Activated CD8-positive, alpha-beta T cell treated with anti-CD3 and anti-CD28 coated beads, Interleukin-2, amount 10 ng/mL, durations not matched to agents 7 days and 5 days (primary cell): ENCODE measurements at regions of chr6 and their contacts with region 1.

Region 1: GRCh38 chr6:34248727-34249551 is at the start of gene SMIM29:
- DNase-seq: peak; percentile 97
- ATAC-seq: peak; percentile 92
- H3K4me3 Mint-ChIP-seq: peak within 1 kb of the TSS; percentile 96
- H3K27ac Mint-ChIP-seq: peak within 1 kb of the TSS; percentile 92
- H3K4me1 Mint-ChIP-seq: peaks cover 53% of the 10 kb centered on the region
- H3K27me3 Mint-ChIP-seq: peaks cover 11% of the 10 kb centered on the region
- total RNA-seq, gene SMIM29: 21.3 to 26.7 TPM

Region 2: DNA sequence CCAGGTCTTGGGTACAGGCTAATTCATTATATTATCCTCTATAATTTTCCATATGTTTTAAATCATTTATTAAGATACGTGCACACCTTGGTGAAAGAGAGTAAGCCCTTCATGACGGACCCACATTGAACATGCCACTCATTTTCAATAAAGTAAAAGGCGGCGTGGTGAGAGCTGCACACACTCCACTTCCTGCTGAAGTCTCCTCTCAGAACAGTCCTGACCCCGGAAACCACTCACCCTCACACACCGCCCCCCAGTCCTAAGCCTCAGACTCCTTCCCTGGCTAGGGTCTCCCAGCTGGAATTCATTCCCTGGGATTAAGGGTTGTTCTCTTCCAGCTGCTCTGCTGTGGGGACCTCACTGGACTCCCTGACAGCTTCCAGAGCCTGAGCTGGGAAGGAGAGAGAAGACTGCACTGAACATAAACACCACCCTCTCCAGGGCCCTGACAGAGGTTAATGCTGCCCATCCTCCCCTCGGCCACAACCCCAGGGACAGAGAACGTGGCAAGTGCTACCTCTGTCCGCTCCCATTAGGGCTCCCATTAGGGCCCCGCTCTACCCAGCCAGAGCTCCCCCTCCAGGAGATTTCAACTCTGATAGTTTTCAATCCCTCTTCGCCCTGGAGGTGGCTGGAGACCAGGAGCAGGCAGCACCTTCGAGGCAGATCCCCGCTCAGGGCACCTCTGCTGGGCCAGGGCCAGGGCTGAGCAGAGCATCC is 127.8 kb before region 1 on chr6:
- CTCF ChIA-PET with region 1: no interaction called
- POLR2A ChIA-PET with region 1: no interaction called
- DNase-seq: no peak
- ATAC-seq: peak; percentile 53
- H3K4me3 Mint-ChIP-seq: no peak overlapping the region
- H3K27ac Mint-ChIP-seq: no peak overlapping the region
- H3K4me1 Mint-ChIP-seq: peaks cover 9% of the 10 kb centered on the region
- H3K27me3 Mint-ChIP-seq: peaks cover 2% of the 10 kb centered on the region

Region 3: DNA sequence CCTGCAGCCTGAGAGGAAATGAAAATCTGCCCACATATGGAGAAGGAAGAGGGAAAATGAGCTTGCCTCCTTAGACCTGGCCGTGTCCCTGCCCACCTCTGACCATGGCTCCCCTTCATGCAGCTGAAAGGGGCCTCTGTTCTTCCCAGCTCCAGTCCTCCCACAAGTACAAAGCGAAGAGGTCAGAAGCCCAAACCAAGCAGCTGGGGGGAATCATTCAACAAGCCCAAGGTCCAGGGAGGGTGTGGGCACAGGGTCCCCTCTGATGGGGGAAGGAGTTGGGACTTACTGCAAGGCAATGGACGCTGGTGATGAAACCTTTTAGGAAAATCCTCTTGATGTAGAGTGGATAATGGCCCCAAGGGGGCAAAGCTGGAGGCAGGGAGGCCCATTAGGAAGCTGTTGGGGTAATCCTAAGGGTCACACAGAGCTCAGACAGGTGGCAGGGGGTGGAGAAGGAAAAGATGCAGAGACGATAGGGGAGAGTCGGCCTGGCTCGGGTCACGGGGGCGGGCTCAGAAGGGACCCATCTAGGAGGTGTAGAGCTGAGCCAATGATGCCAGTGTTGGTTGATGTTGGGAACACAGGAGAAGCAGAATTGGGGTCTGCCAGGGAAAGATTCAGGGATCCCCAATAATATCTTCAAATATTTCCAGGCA is 87.0 kb before region 1 on chr6:
- CTCF ChIA-PET with region 1: interaction called, 10 read pairs
- POLR2A ChIA-PET with region 1: no interaction called
- DNase-seq: no peak
- ATAC-seq: no peak
- H3K4me3 Mint-ChIP-seq: no peak overlapping the region
- H3K27ac Mint-ChIP-seq: no peak overlapping the region
- H3K4me1 Mint-ChIP-seq: no peaks in the 10 kb centered on the region
- H3K27me3 Mint-ChIP-seq: peaks cover 24% of the 10 kb centered on the region

Region 4: DNA sequence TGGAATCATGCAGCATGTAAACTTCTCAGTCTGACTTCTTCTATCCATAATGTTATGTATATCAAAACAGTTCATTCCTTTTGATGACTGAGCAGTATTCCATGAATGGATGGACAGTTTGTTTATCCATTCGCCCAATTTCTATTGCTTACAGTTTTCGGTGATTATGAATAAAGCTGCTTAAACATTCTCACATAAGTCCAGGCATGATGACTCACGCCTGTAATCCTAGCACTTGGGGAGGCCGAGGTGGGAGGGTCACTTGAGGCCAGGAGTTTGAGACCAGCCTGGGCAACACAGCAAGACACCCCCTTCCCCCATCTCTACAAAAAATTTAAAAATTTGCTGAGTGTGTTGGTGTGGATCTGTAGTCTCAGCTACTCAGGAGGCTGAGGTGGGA is 35.2 kb before region 1 on chr6:
- CTCF ChIA-PET with region 1: no interaction called
- POLR2A ChIA-PET with region 1: no interaction called
- DNase-seq: no peak
- ATAC-seq: no peak
- H3K4me3 Mint-ChIP-seq: no peak overlapping the region
- H3K27ac Mint-ChIP-seq: no peak overlapping the region
- H3K4me1 Mint-ChIP-seq: peaks cover 3% of the 10 kb centered on the region
- H3K27me3 Mint-ChIP-seq: peaks cover 2% of the 10 kb centered on the region

Region 5: GRCh38 chr6:34236131-34236996 is 12.6 kb before region 1 on chr6 and contains the start of gene HMGA1:
- CTCF ChIA-PET with region 1: interaction called, 4 read pairs
- POLR2A ChIA-PET with region 1: interaction called, 23 read pairs
- DNase-seq: peak; percentile 93
- ATAC-seq: peak; percentile 74
- H3K4me3 Mint-ChIP-seq: peak within 1 kb of the TSS; percentile 88
- H3K27ac Mint-ChIP-seq: peak within 1 kb of the TSS; percentile 95
- H3K4me1 Mint-ChIP-seq: peaks cover 42% of the 10 kb centered on the region
- H3K27me3 Mint-ChIP-seq: no peaks in the 10 kb centered on the region
- total RNA-seq, gene HMGA1: 300 to 308 TPM

Region 6: DNA sequence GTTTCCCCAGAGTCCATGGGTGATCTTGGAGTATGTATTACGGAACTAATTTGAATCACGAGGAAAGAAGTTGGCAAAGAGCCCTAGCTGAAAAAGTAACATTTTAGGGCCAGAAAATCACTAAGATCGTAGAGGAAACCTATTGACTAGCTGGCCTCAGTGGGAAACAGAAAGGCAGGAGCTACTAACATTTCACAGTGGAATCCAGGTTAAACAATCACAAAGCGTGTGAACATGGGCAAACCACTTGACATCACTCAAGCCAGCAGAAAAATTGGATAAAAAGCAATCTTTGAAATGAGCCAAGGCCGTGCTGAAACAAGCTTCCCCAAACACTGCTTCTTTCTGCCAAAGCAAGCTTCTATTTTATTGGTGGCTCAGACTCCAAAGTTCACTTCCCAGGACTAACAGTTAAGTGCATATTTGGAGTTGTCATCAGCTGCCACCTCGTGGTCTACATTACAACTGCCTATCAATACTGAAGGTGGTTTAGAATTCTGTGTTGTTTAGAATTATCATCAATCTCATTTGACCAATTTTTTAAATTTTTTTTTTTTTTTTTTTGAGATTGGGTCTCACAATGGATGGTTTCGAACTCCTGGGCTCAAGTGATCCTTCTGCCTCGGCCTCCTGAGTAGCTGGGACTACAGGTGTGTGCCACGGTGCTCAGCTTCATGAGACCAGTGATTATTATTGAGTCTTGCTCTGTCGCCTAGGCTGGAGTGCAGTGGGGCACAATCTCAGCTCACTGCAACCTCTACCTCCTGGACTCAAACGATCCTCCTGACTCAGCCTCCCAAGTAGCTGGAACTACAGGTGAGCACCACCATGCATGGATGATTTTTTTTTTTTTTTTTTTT is 166.3 kb after region 1 on chr6:
- CTCF ChIA-PET with region 1: interaction called, 176 read pairs
- POLR2A ChIA-PET with region 1: interaction called, 15 read pairs
- DNase-seq: peak; percentile 66
- ATAC-seq: peak; percentile 67
- H3K4me3 Mint-ChIP-seq: no peak overlapping the region
- H3K27ac Mint-ChIP-seq: no peak overlapping the region
- H3K4me1 Mint-ChIP-seq: peaks cover 8% of the 10 kb centered on the region
- H3K27me3 Mint-ChIP-seq: no peaks in the 10 kb centered on the region

Region 7: DNA sequence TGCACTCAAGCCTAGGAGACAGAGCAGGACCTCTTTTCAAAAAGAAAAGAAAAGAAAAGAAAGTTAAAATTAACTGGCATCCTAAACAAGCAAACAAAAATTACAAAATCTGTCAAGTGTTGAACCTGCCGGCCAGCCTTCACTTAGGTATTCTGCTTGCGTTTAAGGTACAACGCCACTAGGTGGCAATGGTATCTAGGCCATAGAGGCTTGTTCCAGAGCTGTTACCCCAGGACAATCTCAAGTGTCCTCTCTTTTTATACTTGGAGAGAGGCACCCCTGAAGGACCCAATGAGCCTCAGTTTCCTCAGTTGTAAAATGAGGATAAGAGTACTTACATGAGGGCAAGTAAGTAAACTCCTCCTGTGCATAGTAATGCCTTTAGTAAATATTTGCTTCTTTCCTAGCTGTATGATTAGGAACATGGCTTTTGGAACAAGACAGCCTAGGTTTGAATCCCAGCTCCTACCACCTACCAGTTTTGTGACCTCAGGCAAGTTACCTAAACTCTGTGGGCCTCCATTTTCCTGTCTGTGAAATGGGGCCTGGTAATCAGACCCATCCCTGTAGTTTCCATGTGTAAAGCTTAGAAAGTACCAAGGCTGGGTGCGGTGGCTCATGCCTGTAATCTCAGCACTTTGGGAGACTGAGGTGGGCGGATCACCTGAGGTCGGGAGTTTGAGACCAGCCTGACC is 211.1 kb after region 1 on chr6:
- CTCF ChIA-PET with region 1: interaction called, 11 read pairs
- POLR2A ChIA-PET with region 1: no interaction called
- DNase-seq: peak; percentile 67
- ATAC-seq: peak; percentile 65
- H3K4me3 Mint-ChIP-seq: no peak overlapping the region
- H3K27ac Mint-ChIP-seq: no peak overlapping the region
- H3K4me1 Mint-ChIP-seq: peaks cover 1% of the 10 kb centered on the region
- H3K27me3 Mint-ChIP-seq: peaks cover 18% of the 10 kb centered on the region